ENCODE measurements at regions of chr4 and their contacts with region 1.

Region 1: DNA sequence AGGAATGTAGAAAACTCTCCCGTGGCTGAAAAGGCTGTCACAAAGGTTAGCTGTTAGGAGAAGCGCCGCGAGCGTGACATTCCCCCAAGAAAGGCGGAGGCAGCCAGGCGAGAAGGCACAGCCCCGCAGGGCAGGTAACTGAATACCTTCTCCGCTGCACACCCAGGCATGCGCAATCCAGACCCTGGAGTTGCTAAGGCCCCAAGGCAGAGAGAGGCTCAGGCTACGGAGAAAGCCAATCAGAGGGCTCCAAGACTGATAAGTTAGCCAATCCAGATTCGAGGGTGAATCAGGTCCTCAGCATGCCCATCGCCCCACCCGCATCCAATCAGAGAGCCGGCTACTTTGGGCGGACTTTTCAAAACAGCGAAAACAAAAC is 485 bp upstream of the CCNG2 start:
- DNase-seq: peak; percentile 100
- H3K4me3 ChIP-seq: peak overlapping the region; percentile 72 to 99 (median 96)
- H3K27ac ChIP-seq: peak overlapping the region; percentile 94 to 97
- H3K4me1 ChIP-seq: peaks cover 32 to 55% (median 41%) of the 10 kb centered on the region in 4 experiments
- H3K27me3 ChIP-seq: no peaks in the 10 kb centered on the region

Region 2: GRCh38 chr4:76923619-76924357 is 232.7 kb before region 1 on chr4:
- CTCF ChIA-PET with region 1: no interaction called
- POLR2A ChIA-PET with region 1: no interaction called
- DNase-seq: no peak
- H3K4me3 ChIP-seq: no peak overlapping the region
- H3K27ac ChIP-seq: no peak overlapping the region
- H3K4me1 ChIP-seq: no peaks in the 10 kb centered on the region
- H3K27me3 ChIP-seq: no peaks in the 10 kb centered on the region

Region 3: GRCh38 chr4:77120886-77121508 is 35.5 kb before region 1 on chr4:
- CTCF ChIA-PET with region 1: interaction called, 10 read pairs
- POLR2A ChIA-PET with region 1: interaction called, 4 read pairs
- DNase-seq: peak in 2 of 3 donors; percentile 27 to 33
- H3K4me3 ChIP-seq: no peak overlapping the region
- H3K27ac ChIP-seq: no peak overlapping the region
- H3K4me1 ChIP-seq: peaks cover 0 to 4% (median 2%) of the 10 kb centered on the region in 4 experiments
- H3K27me3 ChIP-seq: no peaks in the 10 kb centered on the region

Region 4: DNA sequence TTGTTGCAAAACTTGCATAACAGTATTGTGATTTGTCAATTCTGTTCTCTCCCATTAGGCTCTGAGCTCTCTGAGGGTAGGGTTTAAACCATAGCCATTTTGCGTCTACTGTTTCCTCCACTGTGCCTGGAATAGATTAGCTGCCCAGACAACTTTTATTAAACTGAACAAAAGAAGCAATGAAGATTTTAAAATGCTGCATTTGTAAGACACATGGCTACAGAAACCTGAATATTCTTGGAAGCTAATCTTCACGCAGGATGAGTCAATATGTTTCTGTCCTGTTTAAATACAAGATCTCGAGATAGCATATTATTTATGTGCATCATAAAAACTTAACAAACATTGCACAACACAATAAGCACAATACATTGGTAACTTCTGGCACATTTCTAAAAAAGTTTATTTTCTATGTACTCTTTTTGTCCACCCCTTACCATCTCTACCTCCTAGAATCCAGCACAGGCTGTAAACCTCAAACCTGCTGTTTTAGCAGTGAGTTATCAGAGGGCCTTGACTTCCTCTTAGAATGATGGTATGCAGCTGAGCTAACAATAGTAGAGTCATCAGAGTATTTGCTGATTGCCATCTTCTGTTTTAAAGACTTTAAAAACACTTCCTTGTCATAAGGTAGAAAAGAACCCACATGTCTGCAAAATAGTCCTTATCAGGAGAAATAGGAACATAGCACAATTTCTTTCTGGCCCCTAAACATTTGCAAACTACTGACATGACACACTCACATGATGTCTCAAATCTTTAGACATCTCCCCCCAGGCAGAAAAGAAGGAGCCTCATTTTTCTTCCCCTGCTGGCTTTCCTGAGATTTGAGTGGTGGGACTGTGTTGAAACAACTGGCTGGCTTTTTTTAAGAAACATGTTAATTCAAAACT is 10.1 kb before region 1 on chr4:
- CTCF ChIA-PET with region 1: interaction called, 26 read pairs
- POLR2A ChIA-PET with region 1: interaction called, 13 read pairs
- DNase-seq: peak; percentile 28 to 81 (median 71)
- H3K4me3 ChIP-seq: peak overlapping the region in 2 of 7 experiments; percentile 3 to 5
- H3K27ac ChIP-seq: peak overlapping the region in 1 of 2 experiments; percentile 29
- H3K4me1 ChIP-seq: peaks cover 11 to 27% (median 25%) of the 10 kb centered on the region in 4 experiments
- H3K27me3 ChIP-seq: no peaks in the 10 kb centered on the region

Measured in common myeloid progenitor, CD34-positive (primary cell).